ENCODE measurements at regions of chr12 and their contacts with region 1.

Region 1: GRCh38 chr12:10140001-10140400 is 10.0 kb upstream of the CLEC7A start:
- DNase-seq: peak; percentile 67
- H3K4me3 ChIP-seq: no peak overlapping the region
- H3K27ac ChIP-seq: no peak overlapping the region
- H3K4me1 ChIP-seq: no peaks in the 10 kb centered on the region
- CTCF ChIP-seq: peak; percentile 85

Region 2: DNA sequence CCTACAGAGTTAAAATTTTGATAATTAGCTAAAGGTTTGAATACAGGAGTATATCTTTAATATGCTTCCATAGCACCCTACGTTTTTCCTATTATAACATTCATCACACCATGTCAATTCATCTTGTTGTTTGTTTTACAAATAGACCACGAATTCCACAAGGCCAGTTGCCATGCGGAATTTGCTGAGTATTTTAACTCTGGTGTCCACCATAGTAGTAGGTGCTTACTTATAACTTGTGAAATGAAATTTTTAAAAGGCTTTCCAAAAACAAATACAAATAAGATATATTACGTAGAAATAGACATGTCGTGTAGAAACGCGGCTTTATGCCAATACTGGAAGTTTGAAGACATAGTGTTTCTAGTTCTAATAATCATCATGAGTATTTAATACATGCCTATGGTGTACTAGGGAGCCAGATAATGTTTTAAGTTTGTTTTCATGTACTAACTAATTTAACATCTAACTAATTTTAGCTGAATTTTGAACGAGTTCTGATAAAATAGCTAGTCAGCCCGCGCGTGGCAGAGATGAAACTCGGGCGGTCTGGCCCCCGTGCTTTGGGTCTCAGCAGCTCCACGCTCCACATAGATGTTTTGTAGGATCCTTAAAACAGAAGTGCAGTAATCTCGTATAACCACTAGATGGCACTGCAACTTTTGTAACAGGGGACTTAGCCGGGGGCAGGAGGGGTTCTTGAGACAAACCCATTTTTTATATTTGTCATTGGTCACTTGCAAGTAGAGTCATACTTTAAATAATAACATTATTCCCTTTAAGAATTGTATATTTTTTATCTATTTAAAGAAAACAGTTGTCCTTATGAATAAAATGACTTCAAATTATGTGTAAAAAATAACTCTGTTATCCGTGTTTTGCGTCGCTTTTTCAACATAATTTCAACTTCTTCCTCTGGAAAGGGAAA is 389.5 kb before region 1 on chr12:
- CTCF ChIA-PET with region 1: no interaction called
- POLR2A ChIA-PET with region 1: no interaction called
- intact Hi-C with region 1: loop called (anchors 5 kb)
- DNase-seq: peak; percentile 86
- H3K4me3 ChIP-seq: peak overlapping the region; percentile 26
- H3K27ac ChIP-seq: no peak overlapping the region
- H3K4me1 ChIP-seq: peaks cover 39% of the 10 kb centered on the region
- CTCF ChIP-seq: peak; percentile 80

Region 3: DNA sequence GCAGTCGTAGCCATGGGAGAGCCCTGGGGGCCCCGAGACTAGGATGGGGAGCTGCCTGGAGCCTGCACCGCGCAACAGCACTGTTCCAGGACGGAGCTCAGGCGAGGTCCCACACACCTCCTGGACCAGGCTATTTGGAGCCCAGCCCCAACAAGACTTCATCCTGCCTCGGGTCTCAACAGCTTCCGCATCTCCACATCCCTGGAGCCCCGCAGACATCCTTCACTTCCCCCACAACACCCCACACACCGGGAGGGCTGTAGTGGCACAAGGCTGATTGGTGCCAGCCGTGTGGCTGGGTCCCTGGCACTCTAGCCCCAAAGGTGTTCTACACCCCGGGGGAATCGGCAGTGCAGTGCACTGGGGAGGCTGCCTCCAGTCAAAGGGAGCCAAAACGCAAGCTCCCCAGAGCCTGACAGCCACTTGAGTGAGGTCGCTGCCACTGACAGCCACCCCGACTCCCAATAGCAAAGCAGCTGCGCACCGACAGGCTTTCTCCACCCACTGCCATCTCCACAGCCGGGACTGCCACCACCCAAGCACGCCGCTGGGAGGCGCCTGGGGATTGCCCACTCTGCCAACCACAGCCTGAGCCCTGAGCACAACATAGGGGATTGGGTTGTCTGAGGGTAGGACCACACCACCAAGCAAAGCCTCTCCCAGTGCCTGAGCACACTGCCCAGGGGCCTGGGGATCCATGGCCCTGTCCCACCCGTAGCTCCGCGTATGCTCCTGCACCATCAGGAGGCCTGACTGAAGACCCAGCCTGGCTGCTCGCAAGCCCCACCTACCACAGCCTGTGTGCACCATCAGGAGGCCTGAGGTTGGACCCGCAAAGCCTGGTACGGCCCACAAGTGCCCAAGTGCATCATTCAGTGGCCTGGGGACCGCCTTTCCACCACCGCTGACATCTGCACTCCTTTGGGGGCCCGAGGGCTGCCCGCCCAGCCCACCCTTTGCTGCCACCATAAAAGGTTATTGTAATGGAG is 325.9 kb before region 1 on chr12:
- CTCF ChIA-PET with region 1: no interaction called
- POLR2A ChIA-PET with region 1: interaction called, 4 read pairs
- intact Hi-C with region 1: loop called (anchors 5 kb)
- DNase-seq: peak; percentile 74
- H3K4me3 ChIP-seq: peak overlapping the region; percentile 60
- H3K27ac ChIP-seq: no peak overlapping the region
- H3K4me1 ChIP-seq: peaks cover 7% of the 10 kb centered on the region
- CTCF ChIP-seq: peak; percentile 95

Region 4: GRCh38 chr12:10016881-10017280 is 123.1 kb before region 1 on chr12:
- CTCF ChIA-PET with region 1: no interaction called
- POLR2A ChIA-PET with region 1: no interaction called
- intact Hi-C with region 1: loop called (anchors 5 kb)
- DNase-seq: no peak
- H3K4me3 ChIP-seq: no peak overlapping the region
- H3K27ac ChIP-seq: no peak overlapping the region
- H3K4me1 ChIP-seq: no peaks in the 10 kb centered on the region
- CTCF ChIP-seq: no peak

Region 5: DNA sequence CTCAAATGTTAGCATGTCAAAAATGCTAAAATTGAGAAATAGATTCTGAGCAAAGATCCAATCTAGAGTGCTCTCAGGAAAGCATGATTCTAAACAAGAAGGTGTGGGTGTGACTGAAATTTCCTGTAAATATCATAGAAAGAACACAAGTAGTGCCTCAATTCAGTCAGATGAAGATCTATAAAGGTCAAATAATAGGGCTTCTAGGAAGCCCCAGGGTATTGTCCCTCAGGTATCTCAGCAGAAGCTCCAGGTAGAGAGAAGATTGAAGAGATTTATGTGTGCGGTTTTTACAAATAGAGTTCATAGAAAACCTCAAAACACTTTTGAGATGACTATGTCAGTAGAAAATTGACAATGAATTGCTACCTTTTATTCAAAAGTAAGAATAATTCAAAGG is 180.6 kb after region 1 on chr12:
- CTCF ChIA-PET with region 1: no interaction called
- POLR2A ChIA-PET with region 1: no interaction called
- intact Hi-C with region 1: loop called (anchors 10 kb)
- DNase-seq: no peak
- H3K4me3 ChIP-seq: no peak overlapping the region
- H3K27ac ChIP-seq: no peak overlapping the region
- H3K4me1 ChIP-seq: no peaks in the 10 kb centered on the region
- CTCF ChIP-seq: no peak

Measured in OCI-LY7 (cell line).